GM12878 (cell line): ENCODE measurements at regions of chr1 and their contacts with region 1.

Region 1: GRCh38 chr1:68346188-68346808 is 103.5 kb downstream of the RPE65 start:
- DNase-seq: no peak
- ATAC-seq: peak; percentile 56
- H3K4me3 ChIP-seq: no peak overlapping the region
- H3K27ac ChIP-seq: no peak overlapping the region
- H3K4me1 ChIP-seq: no peaks in the 10 kb centered on the region
- H3K27me3 ChIP-seq: no peaks in the 10 kb centered on the region
- CTCF ChIP-seq: peak; percentile 1 to 33 (median 24); a peak in 3 of 6 replicates
- EP300 ChIP-seq: no peak
- POLR2A ChIP-seq: no peak
- RAD21 ChIP-seq: peak; percentile 28; the same call in 1 of the 2 replicates

Region 2: DNA sequence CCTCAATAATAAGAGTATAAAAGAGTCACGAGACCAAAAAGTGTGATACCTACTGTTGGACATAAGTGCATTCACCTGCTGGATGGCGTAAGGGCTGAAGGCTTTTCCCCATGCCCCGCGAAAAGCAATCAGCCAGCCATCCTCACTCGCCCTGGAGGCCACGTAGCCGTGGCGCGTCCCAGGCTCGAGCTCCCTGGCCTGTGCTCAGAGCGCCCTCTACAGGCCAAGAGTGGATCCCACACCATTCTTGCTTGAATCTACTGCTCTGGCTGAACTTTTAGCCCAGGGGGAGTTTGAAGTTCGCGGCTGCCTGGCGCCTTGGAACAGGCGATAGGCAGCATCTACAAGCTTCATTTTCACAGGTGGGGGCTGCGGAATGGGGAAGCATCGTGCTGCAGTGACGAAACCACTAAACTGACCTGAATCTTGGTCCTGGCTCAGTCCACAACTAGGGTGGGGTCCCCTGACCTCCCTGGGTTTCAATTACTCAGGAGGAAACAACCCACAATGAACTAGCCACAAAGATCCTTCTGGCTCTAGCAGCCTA is 845.8 kb before region 1 on chr1:
- CTCF ChIA-PET with region 1: no interaction called
- POLR2A ChIA-PET with region 1: no interaction called
- RAD21 ChIA-PET with region 1: no interaction called
- SMC1A ChIA-PET with region 1: no interaction called
- in situ Hi-C with region 1: no loop called
- intact Hi-C with region 1: no loop called
- DNase-seq: peak; percentile 55
- ATAC-seq: peak; percentile 100
- H3K4me3 ChIP-seq: no peak overlapping the region
- H3K27ac ChIP-seq: no peak overlapping the region
- H3K4me1 ChIP-seq: peaks cover 3% of the 10 kb centered on the region; the same call in 1 of the 2 replicates
- H3K27me3 ChIP-seq: 0 out of 4 replicates have a peak, but pooled peaks cover 0 to 2% of the 10 kb centered on the region in 2 experiments
- CTCF ChIP-seq: peak; percentile 97 to 99 (median 99); a peak in 5 of 6 replicates
- EP300 ChIP-seq: no peak
- POLR2A ChIP-seq: no peak
- RAD21 ChIP-seq: peak; percentile 100

Region 3: GRCh38 chr1:68321084-68321685 is 25.1 kb before region 1 on chr1:
- CTCF ChIA-PET with region 1: interaction called, 16 read pairs
- POLR2A ChIA-PET with region 1: no interaction called
- RAD21 ChIA-PET with region 1: no interaction called
- SMC1A ChIA-PET with region 1: interaction called, 5 read pairs
- in situ Hi-C with region 1: no loop called
- intact Hi-C with region 1: no loop called
- DNase-seq: no peak
- ATAC-seq: peak; percentile 93
- H3K4me3 ChIP-seq: no peak overlapping the region
- H3K27ac ChIP-seq: no peak overlapping the region
- H3K4me1 ChIP-seq: no peaks in the 10 kb centered on the region
- H3K27me3 ChIP-seq: no peaks in the 10 kb centered on the region
- CTCF ChIP-seq: peak in 2 of 3 experiments; percentile 29 to 42; a peak in 3 of 6 replicates
- EP300 ChIP-seq: no peak
- POLR2A ChIP-seq: no peak
- RAD21 ChIP-seq: no peak